A673 (cell line): ENCODE measurements at regions of chr19 and their contacts with region 1.

Region 1: GRCh38 chr19:11226716-11227166 is 12.7 kb upstream of the ANGPTL8 start:
- DNase-seq: no peak
- H3K4me3 ChIP-seq: no peak overlapping the region
- H3K27ac ChIP-seq: no peak overlapping the region
- H3K4me1 ChIP-seq: no peaks in the 10 kb centered on the region
- H3K27me3 ChIP-seq: no peaks in the 10 kb centered on the region
- CTCF ChIP-seq: no peak

Region 2: DNA sequence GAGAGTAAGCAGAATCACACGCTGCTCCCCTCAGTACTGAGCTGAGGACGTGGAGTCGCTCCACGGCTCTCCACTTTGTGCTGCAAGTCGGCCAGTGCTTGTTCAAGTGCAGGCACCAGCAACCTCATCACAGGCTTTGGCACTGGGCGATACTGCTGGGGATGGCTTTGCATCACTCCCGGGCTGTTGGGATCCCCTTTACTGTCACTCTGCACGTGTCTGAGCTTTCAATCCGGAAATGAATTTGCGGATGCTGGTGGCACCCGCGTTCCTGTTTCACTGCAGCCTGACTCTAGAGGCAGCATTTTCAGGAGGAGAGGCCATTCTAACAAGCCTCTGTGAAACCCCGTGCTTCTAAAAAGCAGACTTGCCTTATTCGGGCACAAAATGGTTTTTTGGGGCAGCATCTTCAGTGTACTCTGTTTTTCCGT is 246.8 kb before region 1 on chr19:
- CTCF ChIA-PET with region 1: no interaction called
- POLR2A ChIA-PET with region 1: no interaction called
- intact Hi-C with region 1: no loop called
- DNase-seq: peak; percentile 50
- H3K4me3 ChIP-seq: no peak overlapping the region
- H3K27ac ChIP-seq: no peak overlapping the region
- H3K4me1 ChIP-seq: peaks cover 5% of the 10 kb centered on the region
- H3K27me3 ChIP-seq: no peaks in the 10 kb centered on the region
- CTCF ChIP-seq: 0 out of 2 replicates have a peak, but pooled peaks have one; percentile 20

Region 3: DNA sequence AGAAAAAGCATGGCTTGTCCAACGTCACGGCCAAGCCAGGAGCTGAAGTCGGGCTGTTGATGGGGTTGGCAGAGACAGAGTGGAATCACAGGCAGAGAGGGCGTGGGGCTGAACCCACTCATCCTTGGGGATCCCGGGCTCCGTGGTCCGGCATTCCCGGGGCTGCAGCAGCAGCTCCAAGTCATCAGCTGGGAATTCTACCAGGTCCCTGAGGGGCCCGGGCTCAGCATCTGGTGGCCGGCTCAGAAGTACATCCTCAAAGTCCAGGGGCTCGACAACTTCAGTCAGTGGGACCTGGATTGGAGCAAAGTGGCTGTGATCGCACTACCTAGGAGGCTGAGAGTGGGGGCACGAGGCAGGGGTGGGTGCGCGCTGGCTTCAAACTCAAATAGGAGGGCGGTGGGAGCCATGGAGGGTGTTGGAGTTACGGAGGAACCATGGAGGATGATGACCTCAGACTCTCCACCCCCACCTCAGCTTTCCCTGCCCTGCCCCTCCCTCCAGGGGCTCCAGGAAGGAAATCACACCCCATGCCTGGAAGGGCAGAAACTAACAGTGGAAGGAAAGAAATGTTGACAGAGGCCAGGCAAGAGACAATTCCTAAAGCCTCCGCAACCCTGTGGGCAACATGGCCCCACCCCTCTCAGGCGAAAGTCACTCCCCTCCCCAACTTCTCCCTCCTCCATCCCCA is 26.1 kb after region 1 on chr19:
- CTCF ChIA-PET with region 1: no interaction called
- POLR2A ChIA-PET with region 1: no interaction called
- intact Hi-C with region 1: loop called (anchors 1 kb)
- DNase-seq: no peak
- H3K4me3 ChIP-seq: no peak overlapping the region
- H3K27ac ChIP-seq: no peak overlapping the region
- H3K4me1 ChIP-seq: no peaks in the 10 kb centered on the region
- H3K27me3 ChIP-seq: no peaks in the 10 kb centered on the region
- CTCF ChIP-seq: no peak